ENCODE measurements at regions of chr4 and their contacts with region 1.

Region 1: GRCh38 chr4:185480016-185480732 is 8.6 kb upstream of the CCDC110 start:
- DNase-seq: no peak
- ATAC-seq: no peak
- H3K4me3 ChIP-seq: no peak overlapping the region
- H3K27ac ChIP-seq: no peak overlapping the region
- H3K4me1 ChIP-seq: no peaks in the 10 kb centered on the region
- H3K27me3 ChIP-seq: peaks cover 10 to 24% of the 10 kb centered on the region in 2 experiments
- CTCF ChIP-seq: no peak
- EP300 ChIP-seq: no peak
- POLR2A ChIP-seq: no peak
- RAD21 ChIP-seq: no peak

Region 2: GRCh38 chr4:185576962-185577950 is 97.1 kb after region 1 on chr4:
- CTCF ChIA-PET with region 1: no interaction called
- POLR2A ChIA-PET with region 1: no interaction called
- in situ Hi-C with region 1: no loop called
- intact Hi-C with region 1: no loop called
- DNase-seq: no peak
- ATAC-seq: no peak
- H3K4me3 ChIP-seq: no peak overlapping the region
- H3K27ac ChIP-seq: no peak overlapping the region
- H3K4me1 ChIP-seq: peaks cover 7% of the 10 kb centered on the region in 2 experiments; a peak in 4 of 5 replicates
- H3K27me3 ChIP-seq: peaks cover 9 to 17% of the 10 kb centered on the region in 2 experiments; a peak in 4 of 5 replicates
- CTCF ChIP-seq: no peak
- EP300 ChIP-seq: no peak
- POLR2A ChIP-seq: no peak
- RAD21 ChIP-seq: no peak

Region 3: GRCh38 chr4:185597532-185598188 is 117.5 kb after region 1 on chr4:
- CTCF ChIA-PET with region 1: no interaction called
- POLR2A ChIA-PET with region 1: interaction called, 3 read pairs
- in situ Hi-C with region 1: loop called (anchors 10 kb)
- intact Hi-C with region 1: no loop called
- DNase-seq: peak; percentile 65 to 78 (median 67)
- ATAC-seq: peak; percentile 89
- H3K4me3 ChIP-seq: no peak overlapping the region
- H3K27ac ChIP-seq: no peak overlapping the region
- H3K4me1 ChIP-seq: no peaks in the 10 kb centered on the region
- H3K27me3 ChIP-seq: peaks cover 17 to 25% of the 10 kb centered on the region in 2 experiments
- CTCF ChIP-seq: peak; percentile 88 to 95 (median 94)
- EP300 ChIP-seq: no peak
- POLR2A ChIP-seq: no peak
- RAD21 ChIP-seq: peak; percentile 77 to 85

Region 4: GRCh38 chr4:185803015-185803414 is 322.8 kb after region 1 on chr4:
- CTCF ChIA-PET with region 1: no interaction called
- POLR2A ChIA-PET with region 1: no interaction called
- in situ Hi-C with region 1: no loop called
- intact Hi-C with region 1: no loop called
- DNase-seq: no peak
- ATAC-seq: no peak
- H3K4me3 ChIP-seq: no peak overlapping the region
- H3K27ac ChIP-seq: no peak overlapping the region
- H3K4me1 ChIP-seq: no peaks in the 10 kb centered on the region
- H3K27me3 ChIP-seq: peaks cover 4 to 7% of the 10 kb centered on the region in 2 experiments; a peak in 1 of 5 replicates
- CTCF ChIP-seq: no peak
- EP300 ChIP-seq: no peak
- POLR2A ChIP-seq: no peak
- RAD21 ChIP-seq: no peak